Naive thymus-derived CD4-positive, alpha-beta T cell (primary cell): ENCODE measurements at regions of chr10 and their contacts with region 1.

Region 1: DNA sequence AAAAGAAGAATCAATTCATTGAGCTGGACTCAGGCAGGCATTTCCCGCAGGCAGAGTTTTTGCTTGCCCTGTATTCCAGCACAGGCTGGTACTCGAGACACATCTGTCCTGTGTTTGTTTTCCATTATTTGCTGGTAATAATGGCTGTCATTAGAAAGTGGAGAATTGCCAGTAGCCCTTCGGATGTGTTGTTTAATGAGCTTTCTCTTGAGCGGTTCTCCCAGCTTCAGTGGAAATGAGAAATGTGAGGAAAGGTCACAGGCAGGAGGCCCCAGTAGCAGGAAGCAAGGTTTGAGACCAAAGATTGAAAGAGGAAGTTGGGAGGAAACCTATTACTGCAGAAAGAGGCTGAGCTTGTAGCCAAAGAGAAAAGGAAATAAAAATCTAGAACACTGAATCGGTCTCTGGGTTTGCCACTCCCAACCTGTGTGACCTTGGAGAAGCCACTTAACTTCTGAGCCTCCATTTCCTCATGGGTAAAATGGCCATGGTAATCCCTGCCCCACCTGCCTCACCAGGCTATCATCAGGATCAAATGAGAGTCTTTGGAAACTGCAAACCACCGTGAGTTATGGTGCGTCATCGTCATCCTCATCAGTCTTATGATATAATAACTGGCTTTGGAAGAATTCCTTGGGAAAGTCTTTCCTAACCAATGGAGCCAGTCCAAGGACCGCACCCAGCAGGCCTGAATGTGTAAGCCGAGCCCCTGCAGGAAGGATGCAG is 67.7 kb downstream of the TACR2 start:
- DNase-seq: peak in 3 of 9 donors; percentile 21 to 32 (median 32)
- ATAC-seq: peak; percentile 50
- H3K4me3 ChIP-seq: peak overlapping the region; percentile 1
- H3K4me3 Mint-ChIP-seq: peak overlapping the region; percentile 68 to 86 (median 78)
- H3K27ac ChIP-seq: peak overlapping the region; percentile 56
- H3K27ac Mint-ChIP-seq: peak overlapping the region; percentile 55 to 98 (median 92)
- H3K4me1 ChIP-seq: peaks cover 39 to 70% of the 10 kb centered on the region in 2 donors
- H3K4me1 Mint-ChIP-seq: peaks cover 59 to 92% (median 78%) of the 10 kb centered on the region in 7 donors
- H3K27me3 ChIP-seq: no peaks in the 10 kb centered on the region
- H3K27me3 Mint-ChIP-seq: no peaks in the 10 kb centered on the region

Region 2: GRCh38 chr10:69222157-69223027 is 126.6 kb before region 1 on chr10:
- CTCF ChIA-PET with region 1: no interaction called
- POLR2A ChIA-PET with region 1: no interaction called
- intact Hi-C with region 1: no loop called
- DNase-seq: peak in 8 of 9 donors; percentile 21 to 80 (median 41)
- ATAC-seq: peak; percentile 88
- H3K4me3 ChIP-seq: peak overlapping the region; percentile 34
- H3K4me3 Mint-ChIP-seq: peak overlapping the region in 4 of 10 donors; percentile 17 to 83 (median 50)
- H3K27ac ChIP-seq: no peak overlapping the region
- H3K27ac Mint-ChIP-seq: peak overlapping the region in 4 of 9 donors; percentile 18 to 91 (median 56)
- H3K4me1 ChIP-seq: peaks cover 11 to 37% of the 10 kb centered on the region in 2 donors
- H3K4me1 Mint-ChIP-seq: peaks cover 0 to 47% (median 15%) of the 10 kb centered on the region in 7 donors
- H3K27me3 ChIP-seq: no peaks in the 10 kb centered on the region
- H3K27me3 Mint-ChIP-seq: no peaks in the 10 kb centered on the region

Region 3: GRCh38 chr10:69327463-69328379 is 21.3 kb before region 1 on chr10:
- CTCF ChIA-PET with region 1: no interaction called
- POLR2A ChIA-PET with region 1: interaction called, 11 read pairs
- intact Hi-C with region 1: loop called (anchors 1 to 2 kb)
- DNase-seq: peak in 5 of 9 donors; percentile 30 to 42 (median 35)
- ATAC-seq: peak; percentile 90
- H3K4me3 ChIP-seq: peak overlapping the region; percentile 32
- H3K4me3 Mint-ChIP-seq: peak overlapping the region; percentile 76 to 90 (median 82)
- H3K27ac ChIP-seq: peak overlapping the region; percentile 65
- H3K27ac Mint-ChIP-seq: peak overlapping the region; percentile 68 to 96 (median 89)
- H3K4me1 ChIP-seq: peaks cover 16 to 18% of the 10 kb centered on the region in 2 donors
- H3K4me1 Mint-ChIP-seq: peaks cover 46 to 93% (median 73%) of the 10 kb centered on the region in 7 donors
- H3K27me3 ChIP-seq: no peaks in the 10 kb centered on the region
- H3K27me3 Mint-ChIP-seq: no peaks in the 10 kb centered on the region

Region 4: DNA sequence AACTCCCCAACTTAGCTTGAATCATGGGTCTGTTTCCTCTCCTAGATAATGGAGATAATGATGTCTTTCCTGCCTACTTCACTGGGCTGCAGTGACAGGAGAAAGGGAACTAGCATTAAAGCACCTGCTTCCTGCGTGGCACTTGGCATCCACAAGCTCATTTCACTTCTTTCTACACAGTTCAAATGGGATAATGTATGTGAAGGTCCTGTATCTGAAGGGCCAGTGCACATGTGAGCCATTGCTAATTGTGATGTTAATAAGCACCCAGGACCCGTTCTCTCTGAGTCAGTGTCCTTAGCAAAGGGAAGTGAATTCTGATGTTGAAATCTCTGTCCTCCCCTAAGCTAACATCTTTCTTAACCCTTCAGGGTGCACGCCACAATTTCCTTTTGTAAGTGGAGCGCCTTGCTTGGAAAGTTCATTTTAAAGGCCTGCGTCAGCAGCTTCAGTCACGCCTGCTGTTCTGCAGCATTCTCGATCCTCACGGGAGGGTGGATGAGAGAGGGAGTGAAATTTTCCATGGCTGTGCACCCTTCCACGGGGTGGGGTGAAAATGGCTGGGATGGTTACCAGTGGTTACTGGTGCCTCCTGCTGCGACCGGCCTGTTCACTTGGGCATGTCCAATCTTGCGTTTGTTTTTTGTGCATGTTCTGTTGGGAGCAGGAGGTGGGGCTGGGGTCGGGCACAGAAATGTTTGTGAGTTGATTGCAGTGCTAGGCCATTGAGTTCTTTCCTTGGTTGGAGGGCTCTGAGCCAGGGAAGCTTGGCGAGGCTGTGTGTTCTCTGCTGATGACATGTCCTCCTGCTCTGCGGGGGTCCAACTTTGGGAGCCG is 11.5 kb before region 1 on chr10:
- CTCF ChIA-PET with region 1: no interaction called
- POLR2A ChIA-PET with region 1: interaction called, 11 read pairs
- intact Hi-C with region 1: loop called in 1 of 2 experiments (anchors 2 kb)
- DNase-seq: no peak
- ATAC-seq: peak; percentile 73
- H3K4me3 ChIP-seq: no peak overlapping the region
- H3K4me3 Mint-ChIP-seq: peak overlapping the region in 5 of 10 donors; percentile 2 to 34 (median 11)
- H3K27ac ChIP-seq: no peak overlapping the region
- H3K27ac Mint-ChIP-seq: peak overlapping the region in 7 of 9 donors; percentile 36 to 77 (median 67)
- H3K4me1 ChIP-seq: peaks cover 19 to 50% of the 10 kb centered on the region in 2 donors
- H3K4me1 Mint-ChIP-seq: peaks cover 54 to 94% (median 72%) of the 10 kb centered on the region in 7 donors
- H3K27me3 ChIP-seq: no peaks in the 10 kb centered on the region
- H3K27me3 Mint-ChIP-seq: no peaks in the 10 kb centered on the region

Region 5: GRCh38 chr10:69360485-69361324 is 11.7 kb after region 1 on chr10:
- CTCF ChIA-PET with region 1: interaction called, 3 read pairs
- POLR2A ChIA-PET with region 1: interaction called, 12 read pairs
- intact Hi-C with region 1: loop called in 1 of 2 experiments (anchors 1 kb)
- DNase-seq: no peak
- ATAC-seq: no peak
- H3K4me3 ChIP-seq: no peak overlapping the region
- H3K4me3 Mint-ChIP-seq: peak overlapping the region in 9 of 10 donors; percentile 21 to 83 (median 73)
- H3K27ac ChIP-seq: peak overlapping the region; percentile 57
- H3K27ac Mint-ChIP-seq: peak overlapping the region; percentile 83 to 98 (median 94)
- H3K4me1 ChIP-seq: peaks cover 12 to 48% of the 10 kb centered on the region in 2 donors
- H3K4me1 Mint-ChIP-seq: peaks cover 44 to 77% (median 64%) of the 10 kb centered on the region in 7 donors
- H3K27me3 ChIP-seq: no peaks in the 10 kb centered on the region
- H3K27me3 Mint-ChIP-seq: no peaks in the 10 kb centered on the region

Region 6: DNA sequence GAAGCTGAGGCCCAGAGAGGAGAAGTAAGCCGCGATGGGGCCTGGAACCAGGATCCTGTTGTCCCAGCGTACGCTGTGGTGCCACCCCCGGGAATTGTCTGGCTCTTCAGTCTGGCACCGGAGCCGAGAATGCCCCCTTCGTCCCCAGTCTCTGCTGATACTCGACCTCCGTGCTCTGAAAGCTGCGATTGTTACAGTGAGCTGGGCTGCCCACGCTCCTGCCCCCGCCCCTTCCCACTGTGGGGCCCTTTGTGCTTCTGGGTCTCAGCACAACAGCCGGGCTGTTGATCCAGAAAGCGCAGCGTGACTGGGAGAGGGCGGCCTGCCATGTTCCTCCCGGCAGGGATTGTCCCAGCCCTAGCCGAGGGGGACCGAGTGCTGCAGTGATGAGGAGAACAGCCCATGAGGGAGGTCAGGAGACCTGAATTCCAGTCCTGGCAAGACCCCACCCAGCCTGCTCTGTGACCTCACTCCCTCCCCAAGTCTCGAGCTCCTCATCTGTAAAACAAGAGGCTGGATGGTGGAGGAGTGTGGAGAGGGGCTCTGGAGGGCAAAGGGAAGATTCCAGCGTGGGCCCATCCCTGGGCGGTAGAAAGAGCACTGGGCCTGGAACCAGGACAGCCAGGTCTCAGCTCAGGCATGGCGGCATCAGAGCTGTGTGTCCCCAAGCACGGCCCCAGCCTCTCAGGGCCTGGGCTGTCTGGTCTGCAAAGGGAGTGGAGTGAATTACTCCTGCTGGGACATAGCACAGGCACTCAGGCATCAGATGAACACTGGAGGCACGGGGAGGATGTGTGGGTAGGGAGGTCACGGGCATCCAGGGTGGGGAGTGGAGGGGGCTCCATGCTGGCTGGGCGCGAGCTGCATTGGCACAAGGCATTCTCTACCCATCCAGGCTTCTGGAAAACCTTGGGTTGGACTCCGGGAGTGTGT is 145.9 kb after region 1 on chr10:
- CTCF ChIA-PET with region 1: no interaction called
- POLR2A ChIA-PET with region 1: no interaction called
- intact Hi-C with region 1: no loop called
- DNase-seq: no peak
- ATAC-seq: no peak
- H3K4me3 ChIP-seq: no peak overlapping the region
- H3K4me3 Mint-ChIP-seq: no peak overlapping the region
- H3K27ac ChIP-seq: no peak overlapping the region
- H3K27ac Mint-ChIP-seq: no peak overlapping the region
- H3K4me1 ChIP-seq: no peaks in the 10 kb centered on the region
- H3K4me1 Mint-ChIP-seq: peaks cover 0 to 6% (median 3%) of the 10 kb centered on the region in 7 donors
- H3K27me3 ChIP-seq: no peaks in the 10 kb centered on the region
- H3K27me3 Mint-ChIP-seq: no peaks in the 10 kb centered on the region

Region 7: GRCh38 chr10:69600761-69601330 is 251.9 kb after region 1 on chr10:
- CTCF ChIA-PET with region 1: no interaction called
- POLR2A ChIA-PET with region 1: no interaction called
- intact Hi-C with region 1: no loop called
- DNase-seq: no peak
- ATAC-seq: no peak
- H3K4me3 ChIP-seq: no peak overlapping the region
- H3K4me3 Mint-ChIP-seq: no peak overlapping the region
- H3K27ac ChIP-seq: no peak overlapping the region
- H3K27ac Mint-ChIP-seq: no peak overlapping the region
- H3K4me1 ChIP-seq: no peaks in the 10 kb centered on the region
- H3K4me1 Mint-ChIP-seq: no peaks in the 10 kb centered on the region
- H3K27me3 ChIP-seq: no peaks in the 10 kb centered on the region
- H3K27me3 Mint-ChIP-seq: peaks cover 31 to 61% (median 36%) of the 10 kb centered on the region in 5 donors

Region 8: DNA sequence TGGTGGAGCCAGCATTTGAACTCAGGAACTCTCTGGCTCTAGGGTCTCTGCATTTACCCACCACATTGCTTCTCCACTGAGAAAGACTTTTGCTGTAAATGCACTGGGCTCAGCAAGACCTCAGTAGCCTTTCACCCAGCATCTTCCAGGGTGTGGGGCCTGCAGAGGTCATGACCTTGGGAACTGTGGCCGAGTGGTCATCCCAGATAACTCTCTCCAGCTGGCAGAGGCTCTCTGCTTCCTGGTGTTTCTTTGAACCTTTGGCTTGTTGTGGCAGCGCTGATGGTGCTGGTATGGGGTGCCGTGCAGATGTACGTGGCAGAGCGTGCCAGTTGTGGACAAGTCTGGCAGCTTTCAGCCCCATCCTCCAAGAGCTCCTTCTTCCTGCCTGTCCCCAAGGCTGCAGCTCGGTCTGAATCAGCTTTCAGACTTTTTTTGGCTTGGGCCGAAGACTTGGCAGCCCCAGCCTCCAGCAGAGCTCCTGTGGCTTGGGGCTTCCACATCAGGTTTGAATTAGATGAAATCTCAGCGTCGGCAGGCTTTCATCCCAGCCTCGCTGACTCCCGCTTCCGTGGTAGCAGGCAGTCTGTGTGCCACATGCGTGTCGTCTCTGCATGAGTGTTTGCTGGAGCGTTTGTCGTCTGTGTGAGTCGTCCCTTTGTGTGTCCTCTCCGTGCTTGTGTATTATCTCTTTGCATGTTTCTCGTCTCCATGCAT is 1344.8 kb after region 1 on chr10:
- CTCF ChIA-PET with region 1: no interaction called
- POLR2A ChIA-PET with region 1: no interaction called
- intact Hi-C with region 1: no loop called
- DNase-seq: no peak
- ATAC-seq: no peak
- H3K4me3 ChIP-seq: no peak overlapping the region
- H3K4me3 Mint-ChIP-seq: no peak overlapping the region
- H3K27ac ChIP-seq: no peak overlapping the region
- H3K27ac Mint-ChIP-seq: no peak overlapping the region
- H3K4me1 ChIP-seq: no peaks in the 10 kb centered on the region
- H3K4me1 Mint-ChIP-seq: peaks cover 0 to 5% (median 0%) of the 10 kb centered on the region in 7 donors
- H3K27me3 ChIP-seq: no peaks in the 10 kb centered on the region
- H3K27me3 Mint-ChIP-seq: peaks cover 0 to 2% (median 0%) of the 10 kb centered on the region in 5 donors